Naive thymus-derived CD4-positive, alpha-beta T cell (primary cell): ENCODE measurements at regions of chr10 and their contacts with region 1.

Region 1: GRCh38 chr10:100508691-100509150 is 10.9 kb downstream of the SEC31B start:
- DNase-seq: peak in 8 of 9 donors; percentile 39 to 80 (median 72)
- ATAC-seq: peak; percentile 69
- H3K4me3 ChIP-seq: peak overlapping the region; percentile 21
- H3K4me3 Mint-ChIP-seq: peak overlapping the region; percentile 21 to 91 (median 71)
- H3K27ac ChIP-seq: peak overlapping the region; percentile 47
- H3K27ac Mint-ChIP-seq: peak overlapping the region; percentile 53 to 94 (median 91)
- H3K4me1 ChIP-seq: peaks cover 50 to 59% of the 10 kb centered on the region in 2 donors
- H3K4me1 Mint-ChIP-seq: peaks cover 43 to 88% (median 70%) of the 10 kb centered on the region in 7 donors
- H3K27me3 ChIP-seq: no peaks in the 10 kb centered on the region
- H3K27me3 Mint-ChIP-seq: no peaks in the 10 kb centered on the region

Region 2: GRCh38 chr10:99659031-99659867 is 849.5 kb before region 1 on chr10 and contains the start of gene ENTPD7:
- CTCF ChIA-PET with region 1: no interaction called
- POLR2A ChIA-PET with region 1: no interaction called
- intact Hi-C with region 1: no loop called
- DNase-seq: peak; percentile 66 to 90 (median 77)
- ATAC-seq: peak; percentile 99
- H3K4me3 ChIP-seq: peak within 1 kb of the TSS; percentile 72
- H3K4me3 Mint-ChIP-seq: peak within 1 kb of the TSS; percentile 80 to 95 (median 92)
- H3K27ac ChIP-seq: peak within 1 kb of the TSS; percentile 69
- H3K27ac Mint-ChIP-seq: peak within 1 kb of the TSS; percentile 5 to 88 (median 73)
- H3K4me1 ChIP-seq: no peaks in the 10 kb centered on the region
- H3K4me1 Mint-ChIP-seq: peaks cover 17 to 32% (median 21%) of the 10 kb centered on the region in 7 donors
- H3K27me3 ChIP-seq: no peaks in the 10 kb centered on the region
- H3K27me3 Mint-ChIP-seq: peaks cover 0 to 25% (median 15%) of the 10 kb centered on the region in 5 donors
- total RNA-seq, gene ENTPD7: 2.5 to 6.6 (median 3.4) TPM

Region 3: DNA sequence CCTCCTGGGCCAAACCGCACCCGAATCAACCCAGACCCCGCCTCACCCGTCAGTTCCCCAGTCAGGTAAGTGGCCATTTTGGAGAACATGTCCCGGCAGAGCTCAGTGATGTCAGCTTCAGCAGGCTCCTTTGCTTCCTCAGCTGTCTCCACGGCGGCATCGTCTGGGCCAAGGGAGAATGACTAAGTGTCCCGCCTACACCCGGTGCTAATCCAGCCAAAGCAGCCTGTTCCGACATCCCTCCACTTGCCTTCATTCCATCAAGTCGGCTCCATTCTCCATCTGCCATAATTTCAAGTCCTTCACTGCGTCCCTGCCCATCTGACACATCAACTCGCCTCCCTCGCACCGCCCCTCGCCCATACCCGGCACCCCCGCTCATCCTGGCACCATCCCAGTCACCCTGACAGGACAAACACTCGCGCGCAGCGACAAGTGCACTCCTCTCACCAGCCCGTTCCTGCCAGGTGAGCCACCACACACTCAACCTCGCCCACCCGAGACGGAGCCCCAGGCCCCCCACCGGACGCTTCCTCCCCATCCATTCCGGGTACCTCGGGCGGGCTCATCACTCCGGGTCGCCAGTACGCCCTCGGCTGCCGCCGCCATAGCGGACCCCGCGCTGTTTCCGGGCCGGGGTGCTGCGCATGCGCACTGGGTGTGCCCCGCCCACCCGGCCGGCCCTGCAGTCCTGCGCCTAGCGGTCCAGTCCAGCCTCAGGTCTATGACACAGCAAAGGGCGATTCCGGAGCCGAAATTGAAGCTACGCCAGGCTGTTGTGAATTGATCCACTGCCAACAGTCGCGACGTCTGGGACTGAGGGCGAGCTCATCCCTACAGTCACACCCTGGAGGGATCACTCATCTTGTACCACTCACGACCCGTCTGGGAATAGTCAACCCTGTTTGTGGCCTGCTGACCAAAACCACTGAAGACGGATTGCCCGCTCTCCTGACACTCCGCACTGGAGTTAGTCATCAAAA is 222.4 kb before region 1 on chr10 and contains the start of gene BLOC1S2:
- CTCF ChIA-PET with region 1: no interaction called
- POLR2A ChIA-PET with region 1: interaction called, 3 read pairs
- intact Hi-C with region 1: loop called in 1 of 2 experiments (anchors 2 kb)
- DNase-seq: peak; percentile 71 to 97 (median 86)
- ATAC-seq: peak; percentile 92
- H3K4me3 ChIP-seq: peak within 1 kb of the TSS; percentile 99
- H3K4me3 Mint-ChIP-seq: peak within 1 kb of the TSS; percentile 95 to 100 (median 100)
- H3K27ac ChIP-seq: peak within 1 kb of the TSS; percentile 86
- H3K27ac Mint-ChIP-seq: peak within 1 kb of the TSS; percentile 94 to 100 (median 99)
- H3K4me1 ChIP-seq: peaks cover 10 to 17% of the 10 kb centered on the region in 2 donors
- H3K4me1 Mint-ChIP-seq: peaks cover 14 to 32% (median 26%) of the 10 kb centered on the region in 7 donors
- H3K27me3 ChIP-seq: no peaks in the 10 kb centered on the region
- H3K27me3 Mint-ChIP-seq: no peaks in the 10 kb centered on the region
- total RNA-seq, gene BLOC1S2: 31.5 to 51.3 (median 39.9) TPM

Region 4: DNA sequence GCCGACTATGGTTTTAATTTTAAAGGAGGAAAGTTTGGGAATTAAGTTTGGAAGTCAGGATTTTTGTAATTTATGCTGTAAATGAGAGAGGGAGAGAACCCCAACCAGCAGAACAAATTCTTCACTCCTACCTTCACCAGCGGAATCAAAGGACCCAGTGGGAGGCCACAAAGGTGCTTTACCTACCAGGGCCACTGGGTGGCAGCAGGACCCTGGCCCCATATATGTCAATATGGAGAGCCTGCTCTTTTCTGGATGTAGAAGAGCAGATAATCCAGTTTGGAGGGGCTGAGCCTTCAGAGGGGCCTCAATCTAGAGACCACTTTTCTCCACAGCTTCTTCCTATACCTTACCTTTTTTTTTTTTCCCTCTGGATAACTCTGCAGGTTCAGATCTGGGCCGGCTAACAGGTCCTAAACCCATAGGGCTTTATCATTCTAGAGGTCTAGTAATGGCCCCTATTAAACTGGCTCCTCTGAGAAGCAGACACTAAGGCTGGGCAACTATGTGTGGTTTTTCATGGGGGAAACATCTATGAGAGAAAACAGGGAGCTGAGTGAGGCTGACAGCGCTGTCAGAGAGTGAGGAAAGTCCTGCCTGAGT is 170.2 kb before region 1 on chr10:
- CTCF ChIA-PET with region 1: interaction called, 16 read pairs
- POLR2A ChIA-PET with region 1: no interaction called
- intact Hi-C with region 1: loop called (anchors 1 kb)
- DNase-seq: peak; percentile 50 to 82 (median 74)
- ATAC-seq: peak; percentile 94
- H3K4me3 ChIP-seq: no peak overlapping the region
- H3K4me3 Mint-ChIP-seq: no peak overlapping the region
- H3K27ac ChIP-seq: no peak overlapping the region
- H3K27ac Mint-ChIP-seq: peak overlapping the region in 2 of 9 donors; percentile 69 to 82
- H3K4me1 ChIP-seq: no peaks in the 10 kb centered on the region
- H3K4me1 Mint-ChIP-seq: peaks cover 0 to 35% (median 0%) of the 10 kb centered on the region in 7 donors
- H3K27me3 ChIP-seq: no peaks in the 10 kb centered on the region
- H3K27me3 Mint-ChIP-seq: peaks cover 0 to 15% (median 0%) of the 10 kb centered on the region in 5 donors

Region 5: DNA sequence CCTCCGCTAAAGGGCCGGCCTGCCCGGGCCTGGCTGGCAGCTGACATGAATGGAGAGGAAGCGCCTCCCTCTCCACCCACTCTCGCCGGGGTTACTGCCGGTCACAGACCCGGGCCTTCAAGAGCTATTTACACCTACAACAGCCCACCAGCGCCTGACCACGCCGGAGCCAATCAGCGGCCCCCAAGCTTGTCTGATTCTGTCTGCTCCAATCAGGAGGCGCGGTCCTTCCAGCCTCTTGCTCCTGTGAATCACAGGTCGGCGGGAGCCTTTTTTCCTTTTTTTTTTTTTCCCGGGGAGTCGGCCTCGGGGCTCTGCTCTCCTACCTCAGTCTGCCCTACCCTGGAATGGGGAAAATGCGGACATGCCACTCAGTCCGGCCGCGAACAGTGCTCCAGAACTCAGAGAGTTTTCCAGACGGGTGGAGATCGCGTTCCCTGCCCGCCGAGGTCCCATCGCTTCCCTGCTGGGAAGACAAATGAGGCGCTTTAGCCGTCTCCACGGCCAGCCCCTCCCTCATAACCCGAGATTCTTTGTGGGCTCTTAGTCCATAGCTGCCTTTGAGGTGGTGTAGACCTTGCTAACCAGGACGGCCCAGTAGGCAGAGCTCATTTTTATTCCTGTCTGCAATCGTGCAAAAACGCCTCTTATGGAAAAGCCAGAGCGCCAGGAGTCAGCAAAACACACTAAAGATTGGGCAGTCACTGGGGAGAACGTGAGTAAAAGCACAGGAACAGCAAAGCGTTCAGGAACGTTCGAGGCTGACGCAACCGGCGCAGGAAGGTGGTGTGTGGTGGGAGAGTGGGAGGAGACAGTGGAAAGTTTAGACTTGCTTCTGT is 135.2 kb before region 1 on chr10:
- CTCF ChIA-PET with region 1: interaction called, 5 read pairs
- POLR2A ChIA-PET with region 1: interaction called, 3 read pairs
- intact Hi-C with region 1: loop called in 1 of 2 experiments (anchors 1 kb)
- DNase-seq: peak; percentile 52 to 91 (median 72)
- ATAC-seq: peak; percentile 89
- H3K4me3 ChIP-seq: peak overlapping the region; percentile 96
- H3K4me3 Mint-ChIP-seq: no peak overlapping the region
- H3K27ac ChIP-seq: peak overlapping the region; percentile 85
- H3K27ac Mint-ChIP-seq: no peak overlapping the region
- H3K4me1 ChIP-seq: peaks cover 32 to 41% of the 10 kb centered on the region in 2 donors
- H3K4me1 Mint-ChIP-seq: peaks cover 14 to 39% (median 27%) of the 10 kb centered on the region in 7 donors
- H3K27me3 ChIP-seq: no peaks in the 10 kb centered on the region
- H3K27me3 Mint-ChIP-seq: no peaks in the 10 kb centered on the region

Region 6: GRCh38 chr10:100438674-100439315 is 69.9 kb before region 1 on chr10:
- CTCF ChIA-PET with region 1: interaction called, 30 read pairs
- POLR2A ChIA-PET with region 1: no interaction called
- intact Hi-C with region 1: loop called in 1 of 2 experiments (anchors 1 kb)
- DNase-seq: no peak
- ATAC-seq: no peak
- H3K4me3 ChIP-seq: no peak overlapping the region
- H3K4me3 Mint-ChIP-seq: no peak overlapping the region
- H3K27ac ChIP-seq: no peak overlapping the region
- H3K27ac Mint-ChIP-seq: no peak overlapping the region
- H3K4me1 ChIP-seq: no peaks in the 10 kb centered on the region
- H3K4me1 Mint-ChIP-seq: peaks cover 0 to 4% (median 0%) of the 10 kb centered on the region in 7 donors
- H3K27me3 ChIP-seq: no peaks in the 10 kb centered on the region
- H3K27me3 Mint-ChIP-seq: no peaks in the 10 kb centered on the region

Region 7: DNA sequence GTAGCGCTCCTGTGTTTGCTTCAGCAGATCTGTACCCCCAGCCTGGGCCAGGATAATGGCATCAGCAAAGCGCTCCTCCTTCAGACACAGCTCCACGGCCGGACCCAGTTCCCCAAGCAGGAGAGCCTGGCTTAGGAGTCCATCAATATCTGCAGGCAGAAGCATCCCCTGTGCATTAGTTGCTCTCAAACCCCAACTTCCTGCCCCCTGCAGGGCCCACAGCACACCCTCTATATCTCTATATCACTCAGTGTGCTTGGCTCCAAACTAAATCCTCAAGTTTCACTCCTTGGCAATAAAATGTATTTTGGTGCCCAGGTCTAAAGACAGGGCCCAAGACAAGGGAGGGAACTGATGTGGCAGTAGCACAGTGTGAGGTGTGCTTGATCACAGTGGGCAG is 10.7 kb before region 1 on chr10:
- CTCF ChIA-PET with region 1: interaction called, 5 read pairs
- POLR2A ChIA-PET with region 1: no interaction called
- intact Hi-C with region 1: loop called in 1 of 2 experiments (anchors 1 kb)
- DNase-seq: no peak
- ATAC-seq: no peak
- H3K4me3 ChIP-seq: no peak overlapping the region
- H3K4me3 Mint-ChIP-seq: peak overlapping the region in 1 of 10 donors; percentile 53
- H3K27ac ChIP-seq: no peak overlapping the region
- H3K27ac Mint-ChIP-seq: peak overlapping the region in 1 of 9 donors; percentile 73
- H3K4me1 ChIP-seq: no peaks in the 10 kb centered on the region
- H3K4me1 Mint-ChIP-seq: peaks cover 0 to 88% (median 0%) of the 10 kb centered on the region in 7 donors
- H3K27me3 ChIP-seq: no peaks in the 10 kb centered on the region
- H3K27me3 Mint-ChIP-seq: no peaks in the 10 kb centered on the region

Region 8: GRCh38 chr10:100529475-100530298 is 21.0 kb after region 1 on chr10 and contains the start of gene NDUFB8:
- CTCF ChIA-PET with region 1: interaction called, 22 read pairs
- POLR2A ChIA-PET with region 1: interaction called, 5 read pairs
- intact Hi-C with region 1: loop called in 1 of 2 experiments (anchors 1 kb)
- DNase-seq: peak; percentile 78 to 90 (median 85)
- ATAC-seq: peak; percentile 85
- H3K4me3 ChIP-seq: peak within 1 kb of the TSS; percentile 93
- H3K4me3 Mint-ChIP-seq: peak within 1 kb of the TSS; percentile 90 to 100 (median 98)
- H3K27ac ChIP-seq: peak within 1 kb of the TSS; percentile 89
- H3K27ac Mint-ChIP-seq: peak within 1 kb of the TSS; percentile 90 to 100 (median 98)
- H3K4me1 ChIP-seq: peaks cover 20 to 31% of the 10 kb centered on the region in 2 donors
- H3K4me1 Mint-ChIP-seq: peaks cover 14 to 46% (median 33%) of the 10 kb centered on the region in 7 donors
- H3K27me3 ChIP-seq: no peaks in the 10 kb centered on the region
- H3K27me3 Mint-ChIP-seq: no peaks in the 10 kb centered on the region
- total RNA-seq, gene NDUFB8: 137 to 304 (median 142) TPM